ENCODE measurements at regions of chr19 and their contacts with region 1.

Region 1: GRCh38 chr19:16111160-16111908 is at the start of gene RAB8A:
- DNase-seq: peak; percentile 99
- H3K4me3 ChIP-seq: peak within 1 kb of the TSS; percentile 85 to 92 (median 86)
- H3K27ac ChIP-seq: peak within 1 kb of the TSS; percentile 71
- H3K4me1 ChIP-seq: peaks cover 10% of the 10 kb centered on the region
- H3K27me3 ChIP-seq: no peaks in the 10 kb centered on the region
- CTCF ChIP-seq: peak; percentile 63 to 82
- total RNA-seq, gene RAB8A: 46.0 to 70.1 TPM

Region 2: DNA sequence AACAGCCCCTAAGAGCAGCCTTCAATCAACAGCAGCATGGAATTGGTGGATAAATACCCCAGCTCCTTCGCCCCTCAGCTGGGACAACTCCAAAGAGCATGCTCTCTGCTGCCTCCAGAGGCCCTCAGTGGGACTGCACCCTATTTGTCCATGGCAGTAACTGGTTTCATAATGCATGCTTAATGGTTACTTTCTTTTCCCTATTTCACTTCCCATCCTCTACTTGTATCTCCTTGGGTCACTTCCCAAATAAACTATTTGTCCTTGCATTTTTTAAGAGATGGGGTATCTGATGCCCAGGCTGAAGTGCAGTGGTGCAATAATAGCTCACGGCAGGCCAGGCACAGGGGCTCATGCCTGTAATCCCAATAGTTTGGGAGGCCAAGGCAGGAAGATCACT is 48.5 kb before region 1 on chr19:
- CTCF ChIA-PET with region 1: no interaction called
- dilution Hi-C with region 1: no loop called
- in situ Hi-C with region 1: no loop called
- intact Hi-C with region 1: loop called (anchors 1 kb)
- DNase-seq: no peak
- H3K4me3 ChIP-seq: no peak overlapping the region
- H3K27ac ChIP-seq: no peak overlapping the region
- H3K4me1 ChIP-seq: peaks cover 12% of the 10 kb centered on the region
- H3K27me3 ChIP-seq: no peaks in the 10 kb centered on the region
- CTCF ChIP-seq: peak; percentile 87 to 98

Region 3: GRCh38 chr19:16078772-16079645 is 32.3 kb before region 1 on chr19:
- CTCF ChIA-PET with region 1: no interaction called
- dilution Hi-C with region 1: no loop called
- in situ Hi-C with region 1: no loop called
- intact Hi-C with region 1: loop called (anchors 1 kb)
- DNase-seq: peak; percentile 94
- H3K4me3 ChIP-seq: peak overlapping the region; percentile 6 to 79 (median 41)
- H3K27ac ChIP-seq: peak overlapping the region; percentile 99
- H3K4me1 ChIP-seq: peaks cover 30% of the 10 kb centered on the region
- H3K27me3 ChIP-seq: no peaks in the 10 kb centered on the region
- CTCF ChIP-seq: no peak

Region 4: GRCh38 chr19:16095071-16095571 is 16.2 kb before region 1 on chr19:
- CTCF ChIA-PET with region 1: no interaction called
- dilution Hi-C with region 1: no loop called
- in situ Hi-C with region 1: no loop called
- intact Hi-C with region 1: loop called (anchors 1 kb)
- DNase-seq: no peak
- H3K4me3 ChIP-seq: no peak overlapping the region
- H3K27ac ChIP-seq: no peak overlapping the region
- H3K4me1 ChIP-seq: no peaks in the 10 kb centered on the region
- H3K27me3 ChIP-seq: no peaks in the 10 kb centered on the region
- CTCF ChIP-seq: no peak

Region 5: GRCh38 chr19:16160943-16161560 is 49.7 kb after region 1 on chr19:
- CTCF ChIA-PET with region 1: no interaction called
- dilution Hi-C with region 1: no loop called
- in situ Hi-C with region 1: no loop called
- intact Hi-C with region 1: loop called (anchors 5 kb)
- DNase-seq: peak; percentile 93
- H3K4me3 ChIP-seq: no peak overlapping the region
- H3K27ac ChIP-seq: peak overlapping the region; percentile 75
- H3K4me1 ChIP-seq: peaks cover 14% of the 10 kb centered on the region
- H3K27me3 ChIP-seq: no peaks in the 10 kb centered on the region
- CTCF ChIP-seq: no peak

Measured in mammary epithelial cell (primary cell).